CD8-positive, alpha-beta T cell (primary cell): ENCODE measurements at regions of chr19 and their contacts with region 1.

Region 1: DNA sequence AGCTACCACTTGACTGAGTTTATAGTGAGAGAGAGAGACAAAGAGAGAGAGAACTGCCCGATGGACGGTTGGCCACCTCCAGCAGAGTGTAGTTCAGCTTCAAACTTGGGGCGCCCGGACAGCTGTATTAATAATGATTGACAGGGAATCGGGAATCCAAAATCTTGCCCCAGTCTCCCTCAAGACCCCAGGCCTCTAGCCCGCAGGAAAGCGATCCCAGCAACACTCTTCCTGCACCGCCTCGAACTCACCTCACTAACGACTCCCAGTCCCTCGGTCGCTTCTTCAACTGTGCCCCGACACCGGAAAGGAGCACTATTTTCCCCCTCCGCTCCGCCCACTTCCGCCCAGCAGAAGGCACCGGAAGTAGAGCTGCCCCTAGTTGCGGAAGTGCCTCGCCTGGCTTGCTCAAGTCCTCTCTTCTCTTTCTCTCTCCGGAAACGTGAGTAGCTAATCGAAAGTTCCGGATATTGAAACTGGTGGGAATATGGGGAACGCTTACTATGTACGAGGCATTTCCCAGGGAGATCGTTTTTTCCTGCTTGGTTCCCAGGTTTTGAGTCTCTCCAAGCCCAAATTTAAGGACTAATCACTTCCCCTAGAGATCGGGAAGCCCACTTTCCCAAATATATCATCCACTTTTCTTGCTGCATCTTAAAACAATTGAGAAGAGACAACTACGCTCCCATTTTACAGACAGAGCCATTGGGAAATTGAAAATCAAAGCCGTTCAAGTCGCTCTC is at the start of gene NOSIP:
- DNase-seq: peak; percentile 93 to 98 (median 97)
- ATAC-seq: peak; percentile 97
- H3K4me3 ChIP-seq: peak within 1 kb of the TSS; percentile 68 to 71
- H3K4me3 Mint-ChIP-seq: peak within 1 kb of the TSS; percentile 95
- H3K27ac ChIP-seq: peak within 1 kb of the TSS; percentile 63 to 66
- H3K27ac Mint-ChIP-seq: peak within 1 kb of the TSS; percentile 94
- H3K4me1 ChIP-seq: peaks cover 22% of the 10 kb centered on the region
- H3K4me1 Mint-ChIP-seq: peaks cover 39% of the 10 kb centered on the region
- H3K27me3 ChIP-seq: no peaks in the 10 kb centered on the region
- H3K27me3 Mint-ChIP-seq: no peaks in the 10 kb centered on the region
- CTCF ChIP-seq: no peak
- total RNA-seq, gene NOSIP: 103 to 110 TPM

Region 2: DNA sequence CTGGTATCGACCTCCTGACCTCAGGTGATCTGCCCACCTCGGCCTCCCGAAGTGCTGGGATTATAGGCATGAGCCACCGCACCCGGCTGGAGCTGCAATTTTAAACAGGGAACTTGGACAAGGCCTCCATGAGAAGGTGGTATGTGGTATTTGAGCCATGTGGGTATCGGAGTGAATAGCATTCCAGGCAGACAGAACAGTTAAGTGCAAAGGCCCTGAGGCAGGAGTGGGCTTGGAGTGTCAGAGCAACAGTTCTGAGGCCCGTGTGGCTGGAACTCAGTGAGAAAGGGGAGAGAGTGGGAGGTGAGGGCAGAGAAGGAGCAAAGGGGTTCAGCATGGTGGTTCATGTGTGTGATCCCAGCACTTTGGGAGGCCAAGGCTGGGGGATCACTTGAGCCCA is 49.7 kb before region 1 on chr19:
- CTCF ChIA-PET with region 1: no interaction called
- POLR2A ChIA-PET with region 1: no interaction called
- intact Hi-C with region 1: no loop called
- DNase-seq: no peak
- ATAC-seq: no peak
- H3K4me3 ChIP-seq: no peak overlapping the region
- H3K4me3 Mint-ChIP-seq: no peak overlapping the region
- H3K27ac ChIP-seq: no peak overlapping the region
- H3K27ac Mint-ChIP-seq: no peak overlapping the region
- H3K4me1 ChIP-seq: peaks cover 34% of the 10 kb centered on the region
- H3K4me1 Mint-ChIP-seq: peaks cover 36% of the 10 kb centered on the region
- H3K27me3 ChIP-seq: no peaks in the 10 kb centered on the region
- H3K27me3 Mint-ChIP-seq: no peaks in the 10 kb centered on the region
- CTCF ChIP-seq: no peak

Region 3: GRCh38 chr19:49665351-49666119 is 85.1 kb after region 1 on chr19 and contains the starts of genes BCL2L12 and IRF3:
- CTCF ChIA-PET with region 1: interaction called, 3 read pairs
- POLR2A ChIA-PET with region 1: interaction called, 10 read pairs
- intact Hi-C with region 1: no loop called
- DNase-seq: peak; percentile 98 to 100 (median 99)
- ATAC-seq: peak; percentile 80
- H3K4me3 ChIP-seq: peak within 1 kb of the TSS; percentile 86 to 95
- H3K4me3 Mint-ChIP-seq: peak within 1 kb of the TSS; percentile 99
- H3K27ac ChIP-seq: peak within 1 kb of the TSS; percentile 77 to 93
- H3K27ac Mint-ChIP-seq: peak within 1 kb of the TSS; percentile 99
- H3K4me1 ChIP-seq: peaks cover 29% of the 10 kb centered on the region
- H3K4me1 Mint-ChIP-seq: peaks cover 38% of the 10 kb centered on the region
- H3K27me3 ChIP-seq: no peaks in the 10 kb centered on the region
- H3K27me3 Mint-ChIP-seq: no peaks in the 10 kb centered on the region
- CTCF ChIP-seq: no peak
- total RNA-seq, gene BCL2L12: 13.1 to 14.7 TPM
- total RNA-seq, gene IRF3: 92.0 to 99.5 TPM

Region 4: GRCh38 chr19:49718511-49718910 is 138.1 kb after region 1 on chr19:
- CTCF ChIA-PET with region 1: no interaction called
- POLR2A ChIA-PET with region 1: no interaction called
- intact Hi-C with region 1: no loop called
- DNase-seq: no peak
- ATAC-seq: no peak
- H3K4me3 ChIP-seq: no peak overlapping the region
- H3K4me3 Mint-ChIP-seq: peak overlapping the region; percentile 92
- H3K27ac ChIP-seq: no peak overlapping the region
- H3K27ac Mint-ChIP-seq: peak overlapping the region; percentile 14
- H3K4me1 ChIP-seq: peaks cover 4% of the 10 kb centered on the region
- H3K4me1 Mint-ChIP-seq: peaks cover 14% of the 10 kb centered on the region
- H3K27me3 ChIP-seq: no peaks in the 10 kb centered on the region
- H3K27me3 Mint-ChIP-seq: no peaks in the 10 kb centered on the region
- CTCF ChIP-seq: no peak